ENCODE measurements at regions of chr4 and their contacts with region 1.

Region 1: GRCh38 chr4:80500613-80501012 is 165.1 kb downstream of the CFAP299 start:
- DNase-seq: peak in 7 of 9 donors; percentile 24 to 81 (median 71)
- ATAC-seq: peak; percentile 96
- H3K4me3 ChIP-seq: peak overlapping the region; percentile 1
- H3K4me3 Mint-ChIP-seq: peak overlapping the region in 8 of 10 donors; percentile 1 to 67 (median 54)
- H3K27ac ChIP-seq: no peak overlapping the region
- H3K27ac Mint-ChIP-seq: peak overlapping the region in 8 of 9 donors; percentile 60 to 88 (median 81)
- H3K4me1 ChIP-seq: peaks cover 23 to 42% of the 10 kb centered on the region in 2 donors
- H3K4me1 Mint-ChIP-seq: peaks cover 9 to 81% (median 71%) of the 10 kb centered on the region in 7 donors
- H3K27me3 ChIP-seq: no peaks in the 10 kb centered on the region
- H3K27me3 Mint-ChIP-seq: peaks cover 0 to 3% (median 0%) of the 10 kb centered on the region in 5 donors

Region 2: DNA sequence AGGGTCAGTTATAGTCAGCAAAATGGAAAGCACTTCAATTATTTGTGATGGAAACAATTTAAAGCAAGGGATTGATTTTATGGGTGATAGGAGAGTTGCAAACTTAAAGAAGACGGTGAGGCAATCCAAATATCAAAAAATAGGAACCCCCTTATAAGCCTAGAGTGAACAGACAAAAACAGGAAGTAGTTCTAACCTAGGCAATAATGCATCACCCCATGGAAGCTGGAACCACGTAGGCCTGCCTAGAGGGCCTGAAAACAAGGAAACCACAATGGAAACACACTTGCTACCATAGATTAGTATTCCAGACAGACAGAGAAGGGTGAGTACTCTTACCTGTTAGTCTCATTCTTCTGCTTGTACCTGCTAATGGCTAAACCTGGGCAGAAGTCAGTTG is 1079.1 kb before region 1 on chr4:
- CTCF ChIA-PET with region 1: no interaction called
- POLR2A ChIA-PET with region 1: no interaction called
- intact Hi-C with region 1: no loop called
- DNase-seq: no peak
- ATAC-seq: no peak
- H3K4me3 ChIP-seq: no peak overlapping the region
- H3K4me3 Mint-ChIP-seq: no peak overlapping the region
- H3K27ac ChIP-seq: no peak overlapping the region
- H3K27ac Mint-ChIP-seq: no peak overlapping the region
- H3K4me1 ChIP-seq: no peaks in the 10 kb centered on the region
- H3K4me1 Mint-ChIP-seq: no peaks in the 10 kb centered on the region
- H3K27me3 ChIP-seq: no peaks in the 10 kb centered on the region
- H3K27me3 Mint-ChIP-seq: no peaks in the 10 kb centered on the region

Region 3: DNA sequence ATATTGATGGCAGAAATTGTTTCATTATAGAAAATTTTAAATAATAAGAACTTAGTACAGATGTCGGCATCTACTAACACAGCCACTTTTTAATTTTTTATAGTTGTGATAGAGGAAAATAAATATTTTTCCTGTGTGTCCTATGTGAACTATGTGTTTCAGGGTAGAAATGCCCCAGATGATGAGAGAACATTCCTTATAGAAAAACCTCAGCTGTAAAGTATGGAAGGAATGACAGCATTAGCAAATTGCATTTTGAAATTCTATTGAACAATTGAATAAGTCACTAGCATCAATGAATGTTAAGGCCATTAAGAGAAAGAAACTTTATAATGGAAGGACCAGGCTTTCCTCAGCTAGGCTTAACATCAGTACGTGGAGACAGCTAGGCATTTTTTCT is 15.9 kb before region 1 on chr4:
- CTCF ChIA-PET with region 1: no interaction called
- POLR2A ChIA-PET with region 1: interaction called, 5 read pairs
- intact Hi-C with region 1: loop called in 1 of 2 experiments (anchors 2 kb)
- DNase-seq: no peak
- ATAC-seq: no peak
- H3K4me3 ChIP-seq: no peak overlapping the region
- H3K4me3 Mint-ChIP-seq: no peak overlapping the region
- H3K27ac ChIP-seq: no peak overlapping the region
- H3K27ac Mint-ChIP-seq: no peak overlapping the region
- H3K4me1 ChIP-seq: peaks cover 0 to under 1% of the 10 kb centered on the region in 2 donors
- H3K4me1 Mint-ChIP-seq: peaks cover 0 to 17% (median 8%) of the 10 kb centered on the region in 7 donors
- H3K27me3 ChIP-seq: no peaks in the 10 kb centered on the region
- H3K27me3 Mint-ChIP-seq: peaks cover 0 to 2% (median 0%) of the 10 kb centered on the region in 5 donors

Region 4: DNA sequence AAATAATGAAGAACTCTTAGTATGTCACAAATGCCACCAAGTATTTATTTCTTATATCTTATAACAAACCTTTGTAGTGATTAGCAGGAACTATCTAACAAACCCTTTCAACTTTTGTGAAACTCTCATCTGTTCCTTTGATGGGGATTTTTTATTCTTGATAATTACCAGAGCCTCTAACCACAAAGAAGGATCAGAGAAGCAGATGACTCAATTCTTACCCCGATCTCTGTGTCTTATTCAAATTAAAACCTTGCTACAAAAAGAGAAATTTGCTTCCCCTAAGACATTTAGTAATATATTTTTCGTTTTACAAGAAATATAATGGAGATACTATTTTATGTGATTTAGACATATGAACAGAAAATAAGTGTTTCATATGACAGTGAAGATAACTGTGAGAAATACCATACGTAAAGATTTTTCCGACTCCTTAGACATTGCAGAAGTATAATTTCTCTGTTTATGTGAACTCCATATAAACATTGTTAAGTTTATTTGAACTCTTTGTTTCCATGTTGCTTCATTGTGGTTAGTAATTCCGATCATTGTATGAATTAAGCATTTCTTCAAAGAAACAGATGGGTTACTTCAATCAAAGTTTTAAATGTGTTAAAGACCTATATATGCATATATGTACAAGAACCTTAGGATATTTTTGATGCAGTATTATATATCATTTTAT is 40.3 kb after region 1 on chr4:
- CTCF ChIA-PET with region 1: no interaction called
- POLR2A ChIA-PET with region 1: no interaction called
- intact Hi-C with region 1: loop called in 1 of 2 experiments (anchors 2 kb)
- DNase-seq: peak in 5 of 9 donors; percentile 5 to 39 (median 20)
- ATAC-seq: peak; percentile 49
- H3K4me3 ChIP-seq: no peak overlapping the region
- H3K4me3 Mint-ChIP-seq: peak overlapping the region in 6 of 10 donors; percentile 12 to 39 (median 20)
- H3K27ac ChIP-seq: no peak overlapping the region
- H3K27ac Mint-ChIP-seq: no peak overlapping the region
- H3K4me1 ChIP-seq: peaks cover 7 to 11% of the 10 kb centered on the region in 2 donors
- H3K4me1 Mint-ChIP-seq: peaks cover 8 to 38% (median 24%) of the 10 kb centered on the region in 7 donors
- H3K27me3 ChIP-seq: no peaks in the 10 kb centered on the region
- H3K27me3 Mint-ChIP-seq: peaks cover 5 to 41% (median 8%) of the 10 kb centered on the region in 5 donors

Region 5: GRCh38 chr4:80655662-80656061 is 155.0 kb after region 1 on chr4:
- CTCF ChIA-PET with region 1: no interaction called
- POLR2A ChIA-PET with region 1: no interaction called
- intact Hi-C with region 1: no loop called
- DNase-seq: no peak
- ATAC-seq: no peak
- H3K4me3 ChIP-seq: no peak overlapping the region
- H3K4me3 Mint-ChIP-seq: no peak overlapping the region
- H3K27ac ChIP-seq: no peak overlapping the region
- H3K27ac Mint-ChIP-seq: no peak overlapping the region
- H3K4me1 ChIP-seq: no peaks in the 10 kb centered on the region
- H3K4me1 Mint-ChIP-seq: peaks cover 0 to 5% (median 0%) of the 10 kb centered on the region in 7 donors
- H3K27me3 ChIP-seq: no peaks in the 10 kb centered on the region
- H3K27me3 Mint-ChIP-seq: peaks cover 0 to 4% (median 0%) of the 10 kb centered on the region in 5 donors

Region 6: DNA sequence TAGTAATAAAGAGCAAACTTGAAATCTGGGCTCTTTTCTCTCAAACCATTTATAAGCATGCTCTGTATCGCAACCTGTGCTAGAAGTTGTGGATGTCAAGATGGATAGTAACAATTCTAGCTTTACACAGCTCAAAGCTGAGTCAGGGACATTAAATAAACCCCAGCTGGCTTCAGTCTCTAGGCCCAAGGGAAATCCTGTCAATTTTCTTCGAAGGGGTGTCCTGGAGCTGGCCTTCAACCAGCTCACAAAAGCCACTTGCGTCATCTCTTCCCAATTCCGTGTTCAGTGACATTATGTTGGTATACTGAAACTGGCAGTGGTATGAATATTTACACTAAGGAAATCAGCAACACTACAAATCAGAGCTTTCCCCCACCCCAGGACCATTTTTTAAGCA is 804.3 kb after region 1 on chr4:
- CTCF ChIA-PET with region 1: no interaction called
- POLR2A ChIA-PET with region 1: no interaction called
- intact Hi-C with region 1: no loop called
- DNase-seq: no peak
- ATAC-seq: no peak
- H3K4me3 ChIP-seq: no peak overlapping the region
- H3K4me3 Mint-ChIP-seq: no peak overlapping the region
- H3K27ac ChIP-seq: no peak overlapping the region
- H3K27ac Mint-ChIP-seq: no peak overlapping the region
- H3K4me1 ChIP-seq: no peaks in the 10 kb centered on the region
- H3K4me1 Mint-ChIP-seq: no peaks in the 10 kb centered on the region
- H3K27me3 ChIP-seq: no peaks in the 10 kb centered on the region
- H3K27me3 Mint-ChIP-seq: peaks cover 0 to 31% (median 24%) of the 10 kb centered on the region in 5 donors

Region 7: GRCh38 chr4:82223715-82224114 is 1723.1 kb after region 1 on chr4:
- CTCF ChIA-PET with region 1: no interaction called
- POLR2A ChIA-PET with region 1: no interaction called
- intact Hi-C with region 1: no loop called
- DNase-seq: peak in 7 of 9 donors; percentile 32 to 57 (median 49)
- ATAC-seq: peak; percentile 93
- H3K4me3 ChIP-seq: no peak overlapping the region
- H3K4me3 Mint-ChIP-seq: peak overlapping the region in 8 of 10 donors; percentile 8 to 74 (median 63)
- H3K27ac ChIP-seq: no peak overlapping the region
- H3K27ac Mint-ChIP-seq: peak overlapping the region in 6 of 9 donors; percentile 3 to 65 (median 35)
- H3K4me1 ChIP-seq: peaks cover 0 to 15% of the 10 kb centered on the region in 2 donors
- H3K4me1 Mint-ChIP-seq: peaks cover 4 to 27% (median 15%) of the 10 kb centered on the region in 7 donors
- H3K27me3 ChIP-seq: no peaks in the 10 kb centered on the region
- H3K27me3 Mint-ChIP-seq: peaks cover 0 to 4% (median 2%) of the 10 kb centered on the region in 5 donors